Aorta (tissue), 5 donors: ENCODE measurements at regions of chr22 and their contacts with region 1.

Region 1: DNA sequence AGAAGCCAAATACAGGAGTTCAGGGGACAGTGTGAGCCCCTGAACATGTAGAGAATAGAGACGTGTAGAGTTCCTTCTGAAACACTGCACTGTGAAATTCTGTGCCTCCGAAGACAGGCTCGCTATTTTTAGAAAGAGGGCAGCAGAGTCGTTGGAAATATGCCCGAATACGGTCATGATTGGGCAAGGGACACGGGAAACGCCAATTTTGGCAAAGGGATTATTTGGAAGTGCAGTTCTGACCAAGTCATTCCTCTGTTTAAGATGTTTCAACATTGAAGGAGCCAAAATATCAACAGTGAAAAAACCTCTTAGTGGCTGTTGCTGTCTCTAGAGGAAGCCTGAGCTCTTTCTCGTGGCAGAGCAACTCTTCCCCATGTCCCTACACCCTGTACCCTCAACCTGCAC is 9.5 kb upstream of the CBX6 start:
- DNase-seq: peak in 1 of 2 donors; percentile 75
- ATAC-seq: peak; percentile 85
- H3K4me3 ChIP-seq: no peak overlapping the region
- H3K27ac ChIP-seq: peak overlapping the region; percentile 95 to 97
- H3K4me1 ChIP-seq: peaks cover 4 to 7% of the 10 kb centered on the region in 2 donors
- H3K27me3 ChIP-seq: no peaks in the 10 kb centered on the region

Region 2: GRCh38 chr22:38927033-38927781 is 45.7 kb after region 1 on chr22:
- intact Hi-C with region 1: loop called (anchors 2 to 5 kb)
- DNase-seq: peak; percentile 87 to 92
- ATAC-seq: peak; percentile 69
- H3K4me3 ChIP-seq: peak overlapping the region in 1 of 2 donors; percentile 36
- H3K27ac ChIP-seq: peak overlapping the region in 1 of 2 donors; percentile 21
- H3K4me1 ChIP-seq: no peaks in the 10 kb centered on the region
- H3K27me3 ChIP-seq: no peaks in the 10 kb centered on the region